HEK293 (cell line): ENCODE measurements at regions of chr6 and their contacts with region 1.

Region 1: DNA sequence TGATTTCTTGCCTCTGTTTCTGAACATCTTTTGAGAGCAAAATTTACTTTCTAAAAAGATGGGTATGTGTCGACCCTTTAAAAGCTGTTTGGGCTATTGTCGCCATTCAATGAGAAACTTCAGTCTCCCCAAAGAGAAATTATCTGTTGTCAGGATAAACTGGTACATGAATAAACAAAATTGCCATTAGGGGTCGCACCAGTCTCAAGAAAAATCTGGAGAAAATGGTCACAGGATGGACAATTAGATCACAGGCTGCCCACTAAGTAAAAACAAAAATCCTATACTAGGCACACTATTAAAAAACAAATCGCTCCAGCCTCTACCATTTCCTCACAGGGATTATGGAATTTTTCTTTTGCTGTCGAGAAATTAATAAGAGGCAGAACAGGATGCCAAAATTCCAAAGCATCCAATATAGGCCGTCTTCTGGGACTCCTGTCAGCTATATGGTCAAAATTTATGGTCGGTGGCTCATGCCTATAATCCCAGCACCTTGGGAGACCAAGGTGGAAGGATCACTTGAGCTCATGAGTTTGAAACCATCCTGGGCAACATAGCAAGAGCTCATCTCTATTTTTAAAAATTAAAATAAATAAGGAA is 5.5 kb upstream of the HLA-E start:
- H3K4me3 ChIP-seq: no peak overlapping the region
- H3K27ac ChIP-seq: no peak overlapping the region
- H3K4me1 ChIP-seq: no peaks in the 10 kb centered on the region
- CTCF ChIP-seq: peak; percentile 33; the same call in 1 of the 2 replicates

Region 2: DNA sequence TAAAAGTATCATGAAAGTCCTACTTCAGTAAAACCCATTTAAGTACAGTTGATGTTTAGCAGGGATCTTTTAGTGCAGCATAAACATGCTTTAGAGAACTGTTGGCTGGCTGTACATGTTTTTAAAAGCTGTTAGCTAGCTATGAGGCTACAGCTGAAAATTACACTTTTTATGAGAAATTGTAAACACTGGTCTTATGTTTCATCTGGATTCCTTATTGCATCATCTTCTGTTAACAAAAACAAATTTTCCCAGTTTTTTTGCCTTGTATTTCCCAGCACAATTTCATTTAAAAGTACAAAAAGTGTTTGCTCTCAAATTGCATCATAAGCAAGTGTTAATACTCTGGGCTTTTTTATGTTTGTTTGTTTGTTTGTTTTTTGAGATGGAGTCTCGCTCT is 12.8 kb before region 1 on chr6:
- CTCF ChIA-PET with region 1: interaction called, 16 read pairs
- POLR2A ChIA-PET with region 1: no interaction called
- H3K4me3 ChIP-seq: no peak overlapping the region
- H3K27ac ChIP-seq: no peak overlapping the region
- H3K4me1 ChIP-seq: no peaks in the 10 kb centered on the region
- CTCF ChIP-seq: no peak

Region 3: GRCh38 chr6:30533460-30534294 is 49.9 kb after region 1 on chr6:
- CTCF ChIA-PET with region 1: interaction called, 324 read pairs
- POLR2A ChIA-PET with region 1: no interaction called
- H3K4me3 ChIP-seq: no peak overlapping the region
- H3K27ac ChIP-seq: no peak overlapping the region
- H3K4me1 ChIP-seq: no peaks in the 10 kb centered on the region
- CTCF ChIP-seq: no peak

Region 4: DNA sequence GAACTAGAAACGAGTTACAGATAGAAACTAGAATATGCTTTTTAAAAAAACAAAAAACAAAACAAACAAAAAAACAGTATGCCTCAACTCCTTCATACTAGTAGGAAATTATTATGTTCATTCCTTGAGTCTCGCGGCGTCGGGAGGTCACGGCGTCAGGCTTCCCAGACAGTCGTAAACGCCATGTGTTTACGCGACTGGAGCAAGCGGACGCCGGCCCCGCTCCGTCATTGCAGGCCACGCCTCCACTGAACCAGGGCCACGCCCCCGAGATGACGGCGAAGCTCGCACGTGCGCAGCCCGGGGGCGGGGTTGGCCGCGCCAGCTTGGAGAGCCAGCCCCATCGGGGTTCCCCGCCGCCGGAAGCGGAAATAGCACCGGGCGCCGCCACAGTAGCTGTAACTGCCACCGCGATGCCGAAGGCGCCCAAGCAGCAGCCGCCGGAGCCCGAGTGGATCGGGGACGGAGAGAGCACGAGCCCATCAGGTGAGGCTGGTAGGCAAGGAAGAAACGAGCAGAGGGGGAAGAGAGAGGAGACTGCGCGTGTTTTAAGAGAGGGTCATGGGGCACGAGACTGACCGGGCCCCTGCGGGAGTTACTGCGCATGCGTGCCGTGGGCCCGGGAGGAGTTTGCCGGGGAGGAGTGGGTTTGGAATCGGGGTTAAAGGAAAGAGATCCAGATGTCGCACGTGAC is 87.4 kb after region 1 on chr6 and contains the start of gene ABCF1:
- CTCF ChIA-PET with region 1: interaction called, 11 read pairs
- POLR2A ChIA-PET with region 1: interaction called, 4 read pairs
- H3K4me3 ChIP-seq: peak within 1 kb of the TSS; percentile 94
- H3K27ac ChIP-seq: peak within 1 kb of the TSS; percentile 64
- H3K4me1 ChIP-seq: peaks cover 9% of the 10 kb centered on the region; the same call in 1 of the 2 replicates
- CTCF ChIP-seq: no peak

Region 5: DNA sequence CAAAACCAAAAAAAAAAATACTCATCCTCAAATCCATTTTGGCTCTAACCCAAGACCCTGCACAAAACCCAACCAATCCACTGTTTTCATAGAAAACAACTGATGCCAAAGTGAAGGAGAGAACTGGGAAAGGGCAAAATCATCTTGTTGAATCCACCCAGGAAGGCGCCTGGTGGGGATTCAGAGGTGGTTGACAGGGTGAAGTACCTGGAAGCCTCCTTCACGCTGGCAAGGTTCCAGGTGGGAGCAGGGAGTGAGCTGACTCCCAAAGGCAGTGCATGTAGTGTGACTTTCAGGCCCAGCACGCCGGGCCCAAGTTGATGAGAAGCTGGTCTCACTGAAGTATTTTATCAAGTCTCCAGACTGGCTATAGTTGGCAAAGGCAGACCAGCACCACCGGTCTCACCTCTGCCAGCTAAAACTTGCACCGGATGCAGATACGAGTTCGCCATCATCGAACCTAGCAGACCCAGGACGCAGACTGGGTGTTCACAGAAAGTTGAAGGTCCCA is 116.7 kb after region 1 on chr6:
- CTCF ChIA-PET with region 1: interaction called, 55 read pairs
- POLR2A ChIA-PET with region 1: interaction called, 15 read pairs
- H3K4me3 ChIP-seq: no peak overlapping the region
- H3K27ac ChIP-seq: peak overlapping the region; percentile 40; the same call in 1 of the 2 replicates
- H3K4me1 ChIP-seq: no peaks in the 10 kb centered on the region
- CTCF ChIP-seq: no peak